ENCODE measurements at regions of chr1 and their contacts with region 1.

Region 1: GRCh38 chr1:182129398-182129797 is 67.9 kb upstream of the ZNF648 start:
- DNase-seq: no peak
- ATAC-seq: no peak
- H3K4me3 ChIP-seq: no peak overlapping the region
- H3K4me3 Mint-ChIP-seq: no peak overlapping the region
- H3K27ac ChIP-seq: no peak overlapping the region
- H3K27ac Mint-ChIP-seq: no peak overlapping the region
- H3K4me1 ChIP-seq: no peaks in the 10 kb centered on the region
- H3K4me1 Mint-ChIP-seq: no peaks in the 10 kb centered on the region
- H3K27me3 ChIP-seq: peaks cover 0 to 6% of the 10 kb centered on the region in 2 experiments
- H3K27me3 Mint-ChIP-seq: peaks cover 0 to 3% of the 10 kb centered on the region in 2 donors

Region 2: DNA sequence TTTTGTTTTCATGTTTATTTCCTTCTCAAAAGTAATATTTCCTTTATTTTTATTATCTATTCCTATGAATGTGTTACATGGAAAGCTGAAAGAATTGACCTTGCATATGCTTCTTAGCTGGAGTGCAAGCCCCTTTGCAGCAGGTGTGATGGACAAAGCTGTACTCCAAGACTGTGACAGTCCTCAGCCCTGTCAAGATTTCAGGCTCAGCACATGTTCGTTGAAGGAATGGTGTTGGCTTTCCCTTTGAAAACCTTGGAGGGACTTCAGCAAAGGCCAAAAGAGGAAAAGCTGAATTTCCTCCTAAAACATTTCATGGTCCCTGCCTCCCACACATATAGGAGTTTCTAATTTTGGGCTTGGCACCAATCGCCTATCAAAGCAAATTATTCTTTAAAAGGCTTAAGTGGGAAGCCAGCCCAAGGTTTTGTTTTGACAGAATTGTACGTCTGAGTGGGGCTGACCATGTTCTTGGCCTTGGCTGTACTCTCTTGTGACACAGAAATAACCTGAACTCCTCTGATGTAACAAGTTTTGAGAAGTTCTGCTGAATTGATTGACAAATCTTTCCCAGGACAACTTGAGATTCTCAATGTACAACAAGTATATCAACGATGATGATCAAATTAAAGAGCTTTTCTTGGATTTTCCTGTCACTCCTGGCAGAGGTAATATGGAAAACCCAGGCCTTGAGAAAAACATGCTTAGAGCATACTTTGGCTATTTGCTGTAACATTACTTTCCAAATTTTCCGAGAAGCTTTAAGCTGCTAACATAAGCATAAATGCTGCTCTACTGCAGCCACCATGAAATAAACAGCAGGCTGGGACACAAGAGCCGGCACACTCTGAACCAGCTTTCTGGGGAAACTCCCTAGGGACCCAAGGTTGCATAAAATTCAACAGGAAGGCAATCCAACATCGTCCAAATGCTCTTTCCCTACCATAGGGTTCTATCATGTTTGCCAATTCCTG is 67.8 kb after region 1 on chr1:
- CTCF ChIA-PET with region 1: interaction called in 1 of 2 experiments, 18 read pairs
- POLR2A ChIA-PET with region 1: no interaction called
- DNase-seq: no peak
- ATAC-seq: no peak
- H3K4me3 ChIP-seq: no peak overlapping the region
- H3K4me3 Mint-ChIP-seq: no peak overlapping the region
- H3K27ac ChIP-seq: no peak overlapping the region
- H3K27ac Mint-ChIP-seq: no peak overlapping the region
- H3K4me1 ChIP-seq: no peaks in the 10 kb centered on the region
- H3K4me1 Mint-ChIP-seq: no peaks in the 10 kb centered on the region
- H3K27me3 ChIP-seq: no peaks in the 10 kb centered on the region
- H3K27me3 Mint-ChIP-seq: peaks cover under 1 to 4% of the 10 kb centered on the region in 2 donors